ENCODE measurements at regions of chr11 and their contacts with region 1.

Region 1: GRCh38 chr11:118895142-118896039 is 11.7 kb downstream of the CXCR5 start:
- DNase-seq: peak; percentile 54 to 92 (median 80)
- ATAC-seq: peak; percentile 73
- H3K4me3 ChIP-seq: peak overlapping the region in 1 of 2 experiments; percentile 35
- H3K4me3 Mint-ChIP-seq: peak overlapping the region; percentile 63
- H3K27ac ChIP-seq: peak overlapping the region; percentile 70 to 77
- H3K27ac Mint-ChIP-seq: peak overlapping the region; percentile 95
- H3K4me1 ChIP-seq: peaks cover 83% of the 10 kb centered on the region
- H3K4me1 Mint-ChIP-seq: peaks cover 84% of the 10 kb centered on the region
- H3K27me3 ChIP-seq: no peaks in the 10 kb centered on the region
- H3K27me3 Mint-ChIP-seq: no peaks in the 10 kb centered on the region
- CTCF ChIP-seq: no peak

Region 2: DNA sequence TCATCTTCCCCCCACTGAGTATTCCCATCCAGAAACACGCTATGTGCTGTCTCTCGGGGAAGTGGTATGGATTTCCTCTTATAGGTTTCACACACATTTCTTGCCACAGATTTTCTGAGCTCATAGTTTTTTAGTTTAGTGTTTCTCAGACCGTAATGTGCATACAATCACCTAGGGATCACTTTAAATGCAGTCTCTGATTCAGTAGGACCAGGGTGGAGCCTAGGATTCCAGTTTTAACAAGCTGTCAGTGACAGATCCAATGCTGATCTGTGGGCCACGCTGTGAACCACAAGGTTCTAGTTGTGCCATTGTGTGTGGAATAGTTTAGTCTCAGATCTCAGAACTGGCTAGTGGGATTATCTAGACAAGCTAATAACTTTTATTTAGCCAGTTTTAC is 35.4 kb before region 1 on chr11:
- CTCF ChIA-PET with region 1: interaction called, 5 read pairs
- POLR2A ChIA-PET with region 1: interaction called, 3 read pairs
- intact Hi-C with region 1: loop called in 1 of 2 experiments (anchors 5 kb)
- DNase-seq: peak in 1 of 9 experiments; percentile 37
- ATAC-seq: peak; percentile 29
- H3K4me3 ChIP-seq: no peak overlapping the region
- H3K4me3 Mint-ChIP-seq: no peak overlapping the region
- H3K27ac ChIP-seq: no peak overlapping the region
- H3K27ac Mint-ChIP-seq: no peak overlapping the region
- H3K4me1 ChIP-seq: peaks cover 8% of the 10 kb centered on the region
- H3K4me1 Mint-ChIP-seq: peaks cover 22% of the 10 kb centered on the region
- H3K27me3 ChIP-seq: no peaks in the 10 kb centered on the region
- H3K27me3 Mint-ChIP-seq: no peaks in the 10 kb centered on the region
- CTCF ChIP-seq: no peak

Region 3: GRCh38 chr11:118878163-118878563 is 17.2 kb before region 1 on chr11:
- CTCF ChIA-PET with region 1: interaction called, 34 read pairs
- POLR2A ChIA-PET with region 1: interaction called, 11 read pairs
- intact Hi-C with region 1: loop called (anchors 1 kb)
- DNase-seq: peak in 3 of 9 experiments; percentile 50 to 69 (median 52)
- ATAC-seq: peak; percentile 15
- H3K4me3 ChIP-seq: no peak overlapping the region
- H3K4me3 Mint-ChIP-seq: peak overlapping the region; percentile 45
- H3K27ac ChIP-seq: peak overlapping the region; percentile 64 to 81
- H3K27ac Mint-ChIP-seq: peak overlapping the region; percentile 97
- H3K4me1 ChIP-seq: peaks cover 74% of the 10 kb centered on the region
- H3K4me1 Mint-ChIP-seq: peaks cover 89% of the 10 kb centered on the region
- H3K27me3 ChIP-seq: no peaks in the 10 kb centered on the region
- H3K27me3 Mint-ChIP-seq: no peaks in the 10 kb centered on the region
- CTCF ChIP-seq: no peak

Region 4: DNA sequence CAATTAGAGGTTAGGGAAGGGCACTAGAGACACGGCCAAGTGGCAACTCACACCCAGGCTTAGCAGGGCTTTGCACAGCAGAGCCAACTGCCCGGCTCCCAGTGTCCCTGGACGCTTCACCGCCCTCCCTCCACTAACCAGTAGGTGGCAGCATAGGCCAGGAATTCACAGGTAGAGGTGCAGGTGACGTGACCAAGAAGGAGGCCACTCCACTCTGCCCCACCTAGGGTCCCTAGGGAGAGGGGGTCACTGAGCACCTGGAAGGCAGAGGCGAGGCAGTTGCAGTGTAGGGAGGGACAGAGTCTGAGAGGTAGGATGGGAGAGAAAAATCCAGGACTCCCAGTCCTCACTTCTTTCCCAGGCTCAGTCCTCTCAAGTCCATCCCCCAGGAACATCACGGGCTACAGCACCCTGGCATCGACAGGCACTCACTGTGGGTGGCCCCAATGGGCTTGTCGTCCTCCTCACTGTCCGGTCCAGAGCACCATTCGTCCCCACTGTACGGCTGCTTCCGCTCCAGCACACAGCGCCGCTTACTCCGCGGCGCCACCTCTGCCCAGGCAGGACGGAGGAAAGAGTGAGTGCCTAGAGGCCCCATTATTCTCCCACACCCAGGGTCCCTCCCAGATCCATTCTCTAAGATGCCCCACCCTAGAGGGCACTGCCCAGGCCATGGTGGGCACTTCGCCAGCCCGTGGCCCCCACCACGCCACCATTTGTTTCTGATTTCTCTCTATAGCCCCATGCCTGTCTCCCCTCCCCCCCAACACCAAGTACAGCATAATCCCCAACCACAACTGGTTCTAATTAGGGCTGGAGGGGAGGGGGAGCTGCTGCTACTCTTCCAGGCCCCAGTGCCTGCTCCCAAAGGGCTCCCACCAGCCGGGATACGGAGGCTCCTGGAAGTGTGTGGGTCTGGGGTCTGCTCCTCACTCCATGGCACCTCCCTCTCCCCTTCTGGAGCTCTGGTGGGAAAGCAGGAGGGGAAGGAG is 12.0 kb after region 1 on chr11:
- CTCF ChIA-PET with region 1: interaction called, 16 read pairs
- POLR2A ChIA-PET with region 1: interaction called, 37 read pairs
- intact Hi-C with region 1: no loop called
- DNase-seq: peak; percentile 79 to 94 (median 87)
- ATAC-seq: peak; percentile 41
- H3K4me3 ChIP-seq: no peak overlapping the region
- H3K4me3 Mint-ChIP-seq: peak overlapping the region; percentile 53
- H3K27ac ChIP-seq: peak overlapping the region; percentile 2 to 61
- H3K27ac Mint-ChIP-seq: peak overlapping the region; percentile 92
- H3K4me1 ChIP-seq: peaks cover 58% of the 10 kb centered on the region
- H3K4me1 Mint-ChIP-seq: peaks cover 58% of the 10 kb centered on the region
- H3K27me3 ChIP-seq: no peaks in the 10 kb centered on the region
- H3K27me3 Mint-ChIP-seq: no peaks in the 10 kb centered on the region
- CTCF ChIP-seq: peak; percentile 91

Measured in CD8-positive, alpha-beta T cell (primary cell).